ENCODE measurements at regions of chr2 and their contacts with region 1.

Region 1: DNA sequence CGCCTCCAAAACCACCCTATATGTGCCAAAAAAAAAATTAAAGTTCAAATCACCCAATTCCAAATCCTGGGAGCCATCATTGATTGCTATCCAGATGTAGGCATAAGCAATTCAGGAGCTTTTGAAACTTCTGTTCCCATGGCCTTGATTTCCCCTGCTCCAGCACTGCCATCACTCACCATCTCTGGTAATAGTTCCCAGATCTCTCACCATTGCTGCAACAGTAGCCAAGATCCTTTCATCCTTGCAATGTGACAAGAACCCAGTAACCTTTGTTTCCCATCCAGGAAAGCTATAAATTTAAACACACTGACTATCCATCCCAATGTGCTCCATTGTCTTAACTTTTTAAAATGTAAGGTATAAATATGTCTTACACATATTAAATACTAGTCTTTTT is 155.4 kb downstream of the PDE11A start:
- DNase-seq: peak in 1 of 2 donors; percentile 22
- ATAC-seq: peak in 6 of 8 donors; percentile 47 to 80 (median 62)
- H3K4me3 ChIP-seq: no peak overlapping the region
- H3K27ac ChIP-seq: peak overlapping the region in 3 of 10 donors; percentile 5 to 28 (median 26)
- H3K4me1 ChIP-seq: peaks cover 0 to 10% (median 0%) of the 10 kb centered on the region in 9 donors
- H3K27me3 ChIP-seq: no peaks in the 10 kb centered on the region
- CTCF ChIP-seq: no peak

Region 2: DNA sequence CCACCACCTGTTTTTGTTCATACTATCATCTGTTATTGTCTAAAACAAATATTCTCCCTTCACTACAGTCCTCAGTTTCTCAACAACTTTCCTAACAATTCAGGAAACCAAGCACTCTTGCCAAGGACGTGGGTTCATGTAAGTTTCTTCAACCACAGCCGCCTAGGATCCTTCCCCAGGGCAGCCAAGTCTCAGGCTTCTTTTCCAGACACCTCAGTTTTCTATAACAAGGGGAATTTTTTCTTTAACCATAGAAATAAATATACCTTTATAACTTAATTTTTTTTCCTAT is 564.0 kb before region 1 on chr2:
- intact Hi-C with region 1: no loop called
- DNase-seq: peak in 1 of 2 donors; percentile 24
- ATAC-seq: peak in 7 of 8 donors; percentile 24 to 80 (median 75)
- H3K4me3 ChIP-seq: no peak overlapping the region
- H3K27ac ChIP-seq: peak overlapping the region in 6 of 10 donors; percentile 49 to 82 (median 62)
- H3K4me1 ChIP-seq: peaks cover 0 to 28% (median 15%) of the 10 kb centered on the region in 9 donors
- H3K27me3 ChIP-seq: no peaks in the 10 kb centered on the region
- CTCF ChIP-seq: no peak

Region 3: DNA sequence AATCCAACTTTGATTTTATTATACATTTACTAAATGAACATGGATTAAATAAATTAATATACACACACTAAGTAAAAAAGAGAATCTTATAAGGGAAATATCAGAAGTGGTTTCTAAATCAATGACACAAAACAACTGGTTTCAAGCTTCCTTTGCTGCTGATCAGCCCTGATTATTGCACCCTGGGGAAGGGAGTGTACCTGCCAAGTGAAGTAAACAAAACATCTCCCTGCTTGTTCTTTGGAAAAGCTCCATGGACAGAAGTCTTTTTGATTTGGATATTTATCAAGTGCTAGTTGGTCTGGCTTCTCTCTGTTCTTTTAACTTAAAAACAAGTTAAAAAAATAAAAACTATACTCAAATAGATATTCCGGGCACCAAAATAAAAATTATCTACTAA is 34.7 kb before region 1 on chr2:
- intact Hi-C with region 1: loop called in 1 of 10 experiments (anchors 5 kb)
- DNase-seq: no peak
- ATAC-seq: peak in 1 of 8 donors; percentile 81
- H3K4me3 ChIP-seq: no peak overlapping the region
- H3K27ac ChIP-seq: peak overlapping the region in 2 of 10 donors; percentile 3 to 66
- H3K4me1 ChIP-seq: peaks cover 0 to 20% (median 0%) of the 10 kb centered on the region in 9 donors
- H3K27me3 ChIP-seq: no peaks in the 10 kb centered on the region
- CTCF ChIP-seq: no peak

Measured in heart right ventricle (tissue), 16 donors.